ENCODE measurements at regions of chr6 and their contacts with region 1.

Region 1: GRCh38 chr6:154696661-154697060 is 36.6 kb upstream of the SCAF8 start:
- DNase-seq: no peak
- H3K4me3 ChIP-seq: no peak overlapping the region
- H3K27ac ChIP-seq: no peak overlapping the region
- H3K4me1 ChIP-seq: no peaks in the 10 kb centered on the region
- H3K27me3 ChIP-seq: no peaks in the 10 kb centered on the region

Region 2: DNA sequence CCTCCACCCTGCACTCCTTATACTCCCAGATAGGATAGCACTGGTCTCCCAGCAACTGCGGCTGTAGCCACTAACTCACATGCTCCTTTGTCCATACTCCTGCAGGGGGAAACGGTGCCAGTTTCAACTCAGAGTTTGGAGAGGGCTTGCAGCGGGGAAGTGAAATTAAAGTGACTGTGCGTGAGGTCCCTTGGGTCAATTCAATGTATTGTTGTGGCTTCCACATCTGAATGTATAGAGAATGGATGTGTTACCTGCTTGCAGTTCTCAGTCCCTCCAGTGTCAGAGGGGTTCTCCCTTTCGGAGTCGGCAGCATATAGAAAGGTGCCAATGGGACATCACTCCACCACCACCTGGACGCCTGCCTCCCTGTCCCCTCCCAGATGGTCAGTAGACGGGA is 92.5 kb before region 1 on chr6:
- CTCF ChIA-PET with region 1: no interaction called
- POLR2A ChIA-PET with region 1: no interaction called
- DNase-seq: no peak
- H3K4me3 ChIP-seq: no peak overlapping the region
- H3K27ac ChIP-seq: no peak overlapping the region
- H3K4me1 ChIP-seq: no peaks in the 10 kb centered on the region
- H3K27me3 ChIP-seq: no peaks in the 10 kb centered on the region

Region 3: DNA sequence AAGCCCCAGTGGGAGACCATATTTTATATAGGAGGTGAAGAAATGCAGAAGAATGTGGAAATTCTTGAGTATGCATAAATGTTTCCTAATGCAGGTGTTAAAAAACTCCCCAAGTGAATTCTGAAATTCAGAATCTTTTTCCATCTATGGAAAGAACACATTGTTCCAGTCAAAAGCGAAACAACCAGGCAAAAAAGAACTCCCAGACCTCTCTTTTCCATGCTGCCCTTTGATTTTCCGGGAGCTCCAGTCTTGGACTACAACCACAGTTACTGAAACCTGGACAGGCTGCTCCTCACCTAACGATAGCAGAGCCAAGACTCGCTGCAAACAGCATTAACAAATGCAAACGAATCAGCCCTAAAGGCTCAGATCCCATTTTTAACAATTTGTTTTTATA is 77.5 kb before region 1 on chr6:
- CTCF ChIA-PET with region 1: no interaction called
- POLR2A ChIA-PET with region 1: no interaction called
- DNase-seq: no peak
- H3K4me3 ChIP-seq: no peak overlapping the region
- H3K27ac ChIP-seq: no peak overlapping the region
- H3K4me1 ChIP-seq: no peaks in the 10 kb centered on the region
- H3K27me3 ChIP-seq: no peaks in the 10 kb centered on the region

Region 4: DNA sequence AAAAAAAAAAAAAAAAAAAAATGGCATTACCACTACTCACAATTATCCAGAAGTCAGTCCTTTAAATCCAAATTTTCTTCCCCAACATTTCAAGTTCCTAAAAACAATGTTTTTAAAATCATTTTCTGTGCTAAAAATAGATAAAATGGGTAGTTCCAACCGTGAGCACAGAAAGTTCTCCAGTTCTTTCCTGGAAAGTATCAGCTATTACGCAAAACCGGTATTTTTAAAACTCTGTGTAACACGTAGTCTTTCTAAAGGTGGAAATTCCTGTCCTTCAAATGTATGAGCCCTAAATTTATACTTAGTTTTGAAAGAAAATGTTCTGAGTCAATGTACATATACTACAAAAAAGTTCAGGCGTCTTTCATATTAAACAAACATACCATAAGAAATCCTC is 46.9 kb before region 1 on chr6:
- CTCF ChIA-PET with region 1: no interaction called
- POLR2A ChIA-PET with region 1: no interaction called
- DNase-seq: no peak
- H3K4me3 ChIP-seq: no peak overlapping the region
- H3K27ac ChIP-seq: no peak overlapping the region
- H3K4me1 ChIP-seq: peaks cover 0 to 19% (median 5%) of the 10 kb centered on the region in 4 experiments
- H3K27me3 ChIP-seq: no peaks in the 10 kb centered on the region

Region 5: GRCh38 chr6:154715446-154715845 is 18.8 kb after region 1 on chr6:
- CTCF ChIA-PET with region 1: no interaction called
- POLR2A ChIA-PET with region 1: no interaction called
- DNase-seq: peak; percentile 42 to 79 (median 77)
- H3K4me3 ChIP-seq: no peak overlapping the region
- H3K27ac ChIP-seq: no peak overlapping the region
- H3K4me1 ChIP-seq: peaks cover 14 to 28% (median 18%) of the 10 kb centered on the region in 4 experiments
- H3K27me3 ChIP-seq: no peaks in the 10 kb centered on the region

Region 6: DNA sequence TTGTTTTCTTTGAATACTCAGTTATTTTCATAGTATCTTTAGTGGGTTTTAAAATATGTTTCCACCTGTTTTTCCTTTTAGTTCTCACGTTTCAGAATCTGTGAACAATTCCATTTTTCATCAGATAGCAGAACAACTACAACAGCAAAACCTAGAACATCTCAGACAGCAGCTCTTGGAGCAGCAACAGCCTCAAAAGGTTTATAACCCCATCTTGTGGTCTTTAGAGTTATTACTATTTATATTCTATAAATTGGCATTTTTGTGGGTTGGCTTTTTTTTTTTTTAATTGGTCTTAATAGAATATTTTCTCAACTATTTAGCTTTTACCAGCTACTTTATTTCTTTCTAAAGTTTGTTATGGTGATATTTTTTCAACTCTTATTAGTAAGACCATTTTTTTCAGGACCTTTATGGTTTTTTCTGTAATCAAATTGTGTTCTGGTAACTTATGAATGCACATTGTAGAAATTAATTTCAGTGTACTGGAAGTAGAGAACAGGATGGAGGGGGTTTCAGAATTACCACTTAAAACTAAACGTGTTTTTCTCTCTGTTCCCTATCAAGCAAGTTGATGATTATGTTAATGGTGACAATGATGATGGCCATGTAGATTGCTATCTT is 108.7 kb after region 1 on chr6:
- CTCF ChIA-PET with region 1: interaction called, 21 read pairs
- POLR2A ChIA-PET with region 1: no interaction called
- DNase-seq: peak; percentile 67 to 83 (median 78)
- H3K4me3 ChIP-seq: no peak overlapping the region
- H3K27ac ChIP-seq: no peak overlapping the region
- H3K4me1 ChIP-seq: no peaks in the 10 kb centered on the region
- H3K27me3 ChIP-seq: no peaks in the 10 kb centered on the region

Measured in common myeloid progenitor, CD34-positive (primary cell).